CD8-positive, alpha-beta T cell (primary cell): ENCODE measurements at regions of chr1 and their contacts with region 1.

Region 1: GRCh38 chr1:147599362-147600118 is 58.2 kb downstream of the BCL9 start:
- DNase-seq: peak; percentile 94 to 98 (median 96)
- ATAC-seq: peak; percentile 84
- H3K4me3 ChIP-seq: peak overlapping the region; percentile 75 to 77
- H3K4me3 Mint-ChIP-seq: peak overlapping the region; percentile 88
- H3K27ac ChIP-seq: peak overlapping the region; percentile 24 to 52
- H3K27ac Mint-ChIP-seq: peak overlapping the region; percentile 72
- H3K4me1 ChIP-seq: peaks cover 15% of the 10 kb centered on the region
- H3K4me1 Mint-ChIP-seq: peaks cover 27% of the 10 kb centered on the region
- H3K27me3 ChIP-seq: no peaks in the 10 kb centered on the region
- H3K27me3 Mint-ChIP-seq: no peaks in the 10 kb centered on the region
- CTCF ChIP-seq: no peak

Region 2: DNA sequence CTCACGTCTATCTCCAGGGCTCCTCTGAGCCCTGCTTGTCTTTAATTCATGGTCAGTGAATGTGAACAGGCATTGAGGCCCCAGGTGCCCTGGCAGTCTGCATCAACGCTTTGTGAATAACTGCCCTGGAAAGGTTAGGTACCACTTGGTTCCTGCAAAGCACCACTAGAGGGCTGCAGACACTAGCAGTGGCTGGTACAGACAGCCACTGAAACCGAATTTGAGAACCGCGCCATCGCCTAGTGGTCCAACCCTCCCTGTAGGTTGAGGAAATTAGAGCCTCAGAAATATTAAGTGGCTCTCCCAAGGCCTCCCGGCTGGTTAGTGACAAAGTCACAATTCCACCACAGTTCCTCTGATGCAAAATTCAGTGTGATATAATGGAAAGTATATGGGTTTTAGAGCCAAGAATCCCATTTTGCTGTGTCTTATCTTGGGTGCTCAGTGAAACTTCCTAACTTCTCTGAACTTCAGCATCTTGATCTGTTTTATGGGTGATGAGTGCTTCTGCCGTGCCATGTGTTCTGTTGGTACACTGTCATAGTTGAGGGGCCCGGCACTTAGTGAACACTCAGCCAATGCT is 104.5 kb before region 1 on chr1:
- CTCF ChIA-PET with region 1: no interaction called
- POLR2A ChIA-PET with region 1: no interaction called
- intact Hi-C with region 1: loop called in 1 of 2 experiments (anchors 1 kb)
- DNase-seq: peak; percentile 31 to 82 (median 72)
- ATAC-seq: peak; percentile 96
- H3K4me3 ChIP-seq: no peak overlapping the region
- H3K4me3 Mint-ChIP-seq: no peak overlapping the region
- H3K27ac ChIP-seq: no peak overlapping the region
- H3K27ac Mint-ChIP-seq: no peak overlapping the region
- H3K4me1 ChIP-seq: no peaks in the 10 kb centered on the region
- H3K4me1 Mint-ChIP-seq: peaks cover 4% of the 10 kb centered on the region
- H3K27me3 ChIP-seq: no peaks in the 10 kb centered on the region
- H3K27me3 Mint-ChIP-seq: peaks cover 9% of the 10 kb centered on the region
- CTCF ChIP-seq: peak; percentile 96

Region 3: GRCh38 chr1:147545133-147545532 is 54.4 kb before region 1 on chr1:
- CTCF ChIA-PET with region 1: interaction called, 9 read pairs
- POLR2A ChIA-PET with region 1: interaction called, 44 read pairs
- intact Hi-C with region 1: loop called (anchors 1 kb)
- DNase-seq: peak; percentile 68 to 95 (median 86)
- ATAC-seq: peak; percentile 81
- H3K4me3 ChIP-seq: peak overlapping the region in 1 of 2 experiments; percentile 33
- H3K4me3 Mint-ChIP-seq: peak overlapping the region; percentile 58
- H3K27ac ChIP-seq: no peak overlapping the region
- H3K27ac Mint-ChIP-seq: peak overlapping the region; percentile 84
- H3K4me1 ChIP-seq: peaks cover 61% of the 10 kb centered on the region
- H3K4me1 Mint-ChIP-seq: peaks cover 63% of the 10 kb centered on the region
- H3K27me3 ChIP-seq: peaks cover 0 to under 1% of the 10 kb centered on the region in 2 experiments
- H3K27me3 Mint-ChIP-seq: peaks cover 5% of the 10 kb centered on the region
- CTCF ChIP-seq: no peak

Region 4: GRCh38 chr1:147627435-147628110 is 28.0 kb after region 1 on chr1:
- CTCF ChIA-PET with region 1: interaction called, 3 read pairs
- POLR2A ChIA-PET with region 1: no interaction called
- intact Hi-C with region 1: loop called in 1 of 2 experiments (anchors 2 kb)
- DNase-seq: peak in 8 of 9 experiments; percentile 34 to 71 (median 58)
- ATAC-seq: peak; percentile 83
- H3K4me3 ChIP-seq: no peak overlapping the region
- H3K4me3 Mint-ChIP-seq: no peak overlapping the region
- H3K27ac ChIP-seq: no peak overlapping the region
- H3K27ac Mint-ChIP-seq: no peak overlapping the region
- H3K4me1 ChIP-seq: peaks cover 6% of the 10 kb centered on the region
- H3K4me1 Mint-ChIP-seq: peaks cover 31% of the 10 kb centered on the region
- H3K27me3 ChIP-seq: no peaks in the 10 kb centered on the region
- H3K27me3 Mint-ChIP-seq: no peaks in the 10 kb centered on the region
- CTCF ChIP-seq: peak; percentile 77